ENCODE measurements at regions of chr7 and their contacts with region 1.

Region 1: DNA sequence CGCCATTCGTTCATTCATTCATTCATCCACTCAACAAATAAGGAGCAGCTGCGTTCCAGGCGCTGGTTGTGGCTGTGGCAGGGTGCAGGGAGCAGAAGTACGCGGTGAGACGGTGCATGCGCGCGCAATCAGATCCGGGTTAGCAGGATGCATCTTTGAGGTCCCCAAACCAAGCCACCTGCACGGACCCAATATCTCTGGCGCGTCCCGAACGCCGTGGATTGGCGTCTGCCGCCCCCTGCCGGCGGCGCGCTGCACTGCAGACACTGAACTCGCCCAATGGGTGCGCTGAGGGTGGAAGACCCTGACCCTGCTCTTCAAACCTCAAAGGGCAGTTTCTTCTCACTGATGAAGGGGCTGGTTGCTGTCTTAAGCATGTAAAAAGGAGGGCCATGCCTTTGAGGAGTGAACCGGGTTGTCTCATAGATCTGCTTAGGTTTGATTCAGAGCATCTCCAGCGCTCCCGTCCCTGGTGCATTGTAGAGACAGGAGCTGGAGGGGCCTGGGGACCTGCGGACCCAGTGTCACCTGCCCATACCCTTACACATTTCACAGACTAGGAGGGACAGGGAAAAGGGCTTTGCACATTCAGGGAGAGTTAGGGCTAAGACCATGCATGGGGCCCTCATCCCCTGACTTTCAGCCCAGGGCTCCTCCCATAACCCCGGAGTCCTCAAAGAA is 102.5 kb downstream of the RAMP3 start:
- DNase-seq: peak; percentile 94
- H3K4me3 Mint-ChIP-seq: no peak overlapping the region
- H3K27ac Mint-ChIP-seq: no peak overlapping the region
- H3K4me1 Mint-ChIP-seq: peaks cover 3% of the 10 kb centered on the region
- H3K27me3 Mint-ChIP-seq: peaks cover 14% of the 10 kb centered on the region

Region 2: DNA sequence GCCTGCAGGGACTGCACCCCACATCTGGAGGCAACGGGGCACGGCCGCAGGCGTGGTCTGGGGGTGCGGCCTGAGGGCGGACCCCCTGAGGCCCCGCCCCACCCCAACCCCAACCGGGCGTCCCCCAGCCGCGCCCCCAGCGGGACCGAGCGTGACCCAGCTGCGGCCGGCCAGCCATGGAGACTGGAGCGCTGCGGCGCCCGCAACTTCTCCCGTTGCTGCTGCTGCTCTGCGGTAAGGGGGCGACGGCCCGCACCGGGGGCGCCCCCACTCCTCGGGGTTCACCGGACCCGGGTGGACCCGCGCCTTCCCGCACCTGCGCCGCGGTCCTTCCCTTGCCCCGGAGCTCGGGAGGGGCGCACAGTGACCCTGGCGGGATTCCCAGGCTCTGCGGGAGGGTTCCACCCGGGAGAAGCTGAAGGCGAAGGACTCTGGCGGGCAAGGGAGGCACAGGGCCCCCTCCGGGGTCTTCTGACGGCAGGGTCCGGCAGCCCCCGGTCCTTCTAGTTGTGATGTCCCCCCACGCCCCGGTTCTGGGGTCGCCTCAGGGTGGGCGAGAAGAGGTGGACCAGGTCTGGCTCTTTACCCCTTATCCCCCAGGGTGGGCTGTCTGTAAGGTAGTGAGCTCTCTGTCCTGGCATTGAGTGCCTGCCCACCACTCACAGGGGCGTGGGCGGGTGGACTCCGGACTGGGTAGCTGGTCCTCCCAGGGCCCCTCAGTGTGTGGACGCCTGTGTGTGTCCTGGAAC is 102.3 kb before region 1 on chr7 and contains the start of gene RAMP3:
- intact Hi-C with region 1: loop called (anchors 1 kb)
- DNase-seq: no peak
- H3K4me3 Mint-ChIP-seq: no peak within 1 kb of the TSS
- H3K27ac Mint-ChIP-seq: no peak within 1 kb of the TSS
- H3K4me1 Mint-ChIP-seq: peaks cover 9% of the 10 kb centered on the region
- H3K27me3 Mint-ChIP-seq: peaks cover 27% of the 10 kb centered on the region
- total RNA-seq, gene RAMP3: not detected in 2 replicates

Region 3: GRCh38 chr7:45217358-45217757 is 42.7 kb before region 1 on chr7:
- intact Hi-C with region 1: no loop called
- DNase-seq: no peak
- H3K4me3 Mint-ChIP-seq: no peak overlapping the region
- H3K27ac Mint-ChIP-seq: no peak overlapping the region
- H3K4me1 Mint-ChIP-seq: no peaks in the 10 kb centered on the region
- H3K27me3 Mint-ChIP-seq: peaks cover 60% of the 10 kb centered on the region

Region 4: DNA sequence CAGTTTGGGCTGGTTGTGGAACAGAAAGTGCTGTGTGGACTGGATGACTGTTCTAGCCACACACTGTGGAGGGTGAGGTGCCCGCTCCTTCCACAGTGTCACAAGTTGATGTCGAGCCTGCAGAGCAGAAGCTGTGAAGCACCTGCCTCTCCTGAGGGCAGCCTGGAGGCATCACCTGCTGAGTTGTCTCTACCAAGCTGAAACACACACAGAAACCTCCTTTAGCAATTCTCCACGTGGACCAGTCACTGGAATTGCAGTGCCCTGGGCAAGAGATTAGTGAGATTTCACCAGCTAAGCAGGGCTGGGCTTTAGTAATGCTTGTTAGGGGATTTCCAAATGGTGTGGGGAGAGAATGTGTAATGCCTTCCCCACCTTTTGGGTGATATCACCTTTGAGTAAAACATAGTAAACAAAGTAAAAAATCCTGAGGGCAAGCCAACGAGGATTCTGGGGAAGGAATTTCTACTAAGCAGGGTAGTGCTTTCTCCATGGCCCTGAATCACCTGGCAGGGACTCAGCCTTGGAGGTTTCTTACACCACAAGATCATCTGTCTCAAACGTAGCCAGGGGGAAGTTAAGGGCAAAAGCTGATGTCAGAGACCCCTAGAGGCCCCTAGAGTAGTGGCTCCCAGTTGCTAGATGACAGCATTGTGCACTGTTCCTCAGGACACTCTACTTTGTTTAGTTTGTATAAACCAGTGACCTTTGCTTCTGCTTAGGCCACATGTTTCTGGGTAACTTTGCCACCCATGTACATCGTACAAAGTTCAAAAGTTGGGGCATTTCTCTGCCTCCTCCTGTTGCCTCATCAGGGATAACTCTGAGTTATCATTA is 894.1 kb after region 1 on chr7:
- intact Hi-C with region 1: no loop called
- DNase-seq: no peak
- H3K4me3 Mint-ChIP-seq: no peak overlapping the region
- H3K27ac Mint-ChIP-seq: no peak overlapping the region
- H3K4me1 Mint-ChIP-seq: no peaks in the 10 kb centered on the region
- H3K27me3 Mint-ChIP-seq: no peaks in the 10 kb centered on the region

Measured in activated CD4-positive, alpha-beta T cell treated with anti-CD3 and anti-CD28 coated beads, Interleukin-2, amount 10 ng/mL, durations not matched to agents 24 days and 14 days (primary cell).